CD14-positive monocyte (primary cell): ENCODE measurements at regions of chr1 and their contacts with region 1.

Region 1: GRCh38 chr1:35882945-35883634 is at the start of gene AGO1:
- DNase-seq: peak; percentile 92 to 95 (median 93)
- H3K4me3 ChIP-seq: peak within 1 kb of the TSS; percentile 94 to 98 (median 95)
- H3K4me3 Mint-ChIP-seq: peak within 1 kb of the TSS; percentile 95
- H3K27ac ChIP-seq: peak within 1 kb of the TSS; percentile 43 to 87
- H3K27ac Mint-ChIP-seq: peak within 1 kb of the TSS; percentile 76 to 93 (median 88)
- H3K4me1 ChIP-seq: peaks cover 51 to 53% of the 10 kb centered on the region in 2 donors
- H3K4me1 Mint-ChIP-seq: peaks cover 52% of the 10 kb centered on the region
- H3K27me3 ChIP-seq: no peaks in the 10 kb centered on the region
- H3K27me3 Mint-ChIP-seq: peaks cover 0 to 5% (median 1%) of the 10 kb centered on the region in 3 donors
- CTCF ChIP-seq: peak; percentile 98
- polyA plus RNA-seq, gene AGO1: 10.9 to 19.4 (median 13.9) TPM

Region 2: GRCh38 chr1:35923791-35924221 is 40.7 kb after region 1 on chr1:
- intact Hi-C with region 1: loop called in 1 of 2 experiments (anchors 5 kb)
- DNase-seq: no peak
- H3K4me3 ChIP-seq: no peak overlapping the region
- H3K4me3 Mint-ChIP-seq: no peak overlapping the region
- H3K27ac ChIP-seq: no peak overlapping the region
- H3K27ac Mint-ChIP-seq: no peak overlapping the region
- H3K4me1 ChIP-seq: no peaks in the 10 kb centered on the region
- H3K4me1 Mint-ChIP-seq: peaks cover 9% of the 10 kb centered on the region
- H3K27me3 ChIP-seq: no peaks in the 10 kb centered on the region
- H3K27me3 Mint-ChIP-seq: no peaks in the 10 kb centered on the region
- CTCF ChIP-seq: no peak

Region 3: GRCh38 chr1:36172983-36173382 is 289.9 kb after region 1 on chr1:
- intact Hi-C with region 1: no loop called
- DNase-seq: no peak
- H3K4me3 ChIP-seq: no peak overlapping the region
- H3K4me3 Mint-ChIP-seq: no peak overlapping the region
- H3K27ac ChIP-seq: peak overlapping the region in 1 of 2 donors; percentile 43
- H3K27ac Mint-ChIP-seq: peak overlapping the region in 4 of 7 donors; percentile 32 to 69 (median 52)
- H3K4me1 ChIP-seq: no peaks in the 10 kb centered on the region
- H3K4me1 Mint-ChIP-seq: peaks cover 6% of the 10 kb centered on the region
- H3K27me3 ChIP-seq: no peaks in the 10 kb centered on the region
- H3K27me3 Mint-ChIP-seq: peaks cover 0 to 5% (median 3%) of the 10 kb centered on the region in 3 donors
- CTCF ChIP-seq: no peak